ENCODE measurements at regions of chr1 and their contacts with region 1.

Region 1: DNA sequence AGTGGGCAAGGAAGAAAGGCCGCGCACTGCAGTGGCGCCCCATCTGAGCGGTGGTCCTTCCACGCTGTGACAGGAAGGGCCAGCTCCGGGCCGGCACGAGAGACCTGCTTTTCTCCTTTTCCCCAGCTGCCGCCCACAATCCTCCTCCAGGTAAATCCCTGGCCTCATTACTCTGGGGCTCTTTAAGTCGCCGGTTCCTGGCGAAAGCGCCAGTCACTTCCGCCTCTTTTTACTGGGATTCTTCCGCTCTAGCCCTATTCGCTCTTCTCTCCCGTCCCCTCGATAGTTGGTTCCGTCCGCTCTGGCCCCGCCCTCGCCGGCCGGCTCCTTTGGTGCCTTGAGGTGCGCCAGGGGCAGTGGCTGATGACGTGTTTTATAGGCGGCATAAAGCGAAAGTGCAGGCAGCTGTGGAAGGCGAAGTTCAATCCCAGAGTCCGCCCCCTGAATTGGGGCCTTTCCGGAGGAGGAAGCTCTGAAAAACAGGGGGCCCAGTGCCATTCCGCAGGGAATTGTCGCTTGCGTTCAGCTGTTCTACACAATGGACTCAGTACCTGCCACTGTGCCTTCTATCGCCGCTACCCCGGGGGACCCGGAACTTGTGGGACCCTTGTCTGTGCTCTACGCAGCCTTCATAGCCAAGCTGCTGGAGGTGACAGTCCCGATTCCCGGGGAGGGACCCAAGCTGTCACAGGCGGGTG is 26.2 kb downstream of the MIA3 start:
- DNase-seq: peak; percentile 99
- ATAC-seq: peak; percentile 100
- H3K4me3 ChIP-seq: peak overlapping the region; percentile 80
- H3K27ac ChIP-seq: peak overlapping the region; percentile 83
- H3K4me1 ChIP-seq: 0 out of 2 replicates have a peak, but pooled peaks cover 1% of the 10 kb centered on the region
- H3K27me3 ChIP-seq: no peaks in the 10 kb centered on the region
- CTCF ChIP-seq: no peak
- POLR2A ChIP-seq: peak; percentile 95
- RAD21 ChIP-seq: no peak

Region 2: GRCh38 chr1:221458447-221459156 is 1185.5 kb before region 1 on chr1:
- CTCF ChIA-PET with region 1: no interaction called
- POLR2A ChIA-PET with region 1: no interaction called
- dilution Hi-C with region 1: no loop called
- in situ Hi-C with region 1: loop called (anchors 25 kb)
- intact Hi-C with region 1: no loop called
- DNase-seq: peak; percentile 81
- ATAC-seq: peak; percentile 88
- H3K4me3 ChIP-seq: no peak overlapping the region
- H3K27ac ChIP-seq: no peak overlapping the region
- H3K4me1 ChIP-seq: peaks cover 7% of the 10 kb centered on the region
- H3K27me3 ChIP-seq: no peaks in the 10 kb centered on the region
- CTCF ChIP-seq: no peak
- POLR2A ChIP-seq: no peak
- RAD21 ChIP-seq: no peak

Region 3: DNA sequence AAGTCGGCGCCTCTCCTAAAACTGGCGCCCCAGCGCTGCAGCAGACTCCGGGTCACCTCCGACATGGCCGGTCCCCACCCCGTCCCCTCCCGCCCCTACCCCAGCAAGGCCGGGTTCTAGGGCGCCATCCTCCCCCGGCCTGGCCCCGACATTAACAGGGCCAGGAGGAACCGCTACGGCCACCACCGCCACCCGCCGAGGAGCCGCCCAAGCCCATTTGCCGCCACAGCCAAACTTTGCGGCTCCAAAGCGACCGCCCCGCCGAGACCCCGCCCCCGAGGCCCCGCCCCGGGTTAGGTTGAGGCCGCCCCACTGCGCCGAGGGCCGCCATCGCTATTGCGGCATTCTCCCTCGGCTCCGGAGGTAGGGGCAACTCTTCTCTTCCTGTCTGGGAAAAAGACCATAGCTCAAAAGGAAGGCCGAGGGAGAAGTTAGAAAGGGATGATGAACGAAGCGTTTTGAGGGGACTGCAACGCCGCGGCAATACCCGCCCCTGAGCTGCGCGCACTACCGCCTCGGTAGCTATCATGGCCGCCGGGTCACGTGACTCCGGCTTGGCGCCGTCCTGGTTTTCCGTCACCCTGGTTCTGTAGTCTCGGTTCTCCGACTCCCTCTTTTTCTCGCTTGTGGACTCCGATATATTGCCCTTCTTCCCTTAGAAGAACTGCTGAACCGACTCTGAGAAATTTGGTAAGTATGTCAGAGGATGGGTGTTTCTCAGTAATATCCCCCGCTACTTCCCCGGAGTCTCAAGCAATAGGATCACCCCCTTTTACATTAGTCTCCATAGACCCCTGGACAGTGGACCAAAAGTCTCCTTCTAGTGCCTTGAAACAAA is 68.4 kb after region 1 on chr1 and contains the starts of genes AIDA and BROX:
- CTCF ChIA-PET with region 1: no interaction called
- POLR2A ChIA-PET with region 1: no interaction called
- dilution Hi-C with region 1: no loop called
- in situ Hi-C with region 1: no loop called
- intact Hi-C with region 1: loop called (anchors 2 kb)
- DNase-seq: peak; percentile 76
- ATAC-seq: peak; percentile 88
- H3K4me3 ChIP-seq: peak within 1 kb of the TSS; percentile 92
- H3K27ac ChIP-seq: peak within 1 kb of the TSS; percentile 100
- H3K4me1 ChIP-seq: no peaks in the 10 kb centered on the region
- H3K27me3 ChIP-seq: no peaks in the 10 kb centered on the region
- CTCF ChIP-seq: no peak
- POLR2A ChIP-seq: peak; percentile 52; the same call in 1 of the 2 replicates
- RAD21 ChIP-seq: no peak
- total RNA-seq, gene AIDA: 47.9 and 71.4 TPM in 2 replicates
- total RNA-seq, gene BROX: 43.4 and 63.9 TPM in 2 replicates

Region 4: DNA sequence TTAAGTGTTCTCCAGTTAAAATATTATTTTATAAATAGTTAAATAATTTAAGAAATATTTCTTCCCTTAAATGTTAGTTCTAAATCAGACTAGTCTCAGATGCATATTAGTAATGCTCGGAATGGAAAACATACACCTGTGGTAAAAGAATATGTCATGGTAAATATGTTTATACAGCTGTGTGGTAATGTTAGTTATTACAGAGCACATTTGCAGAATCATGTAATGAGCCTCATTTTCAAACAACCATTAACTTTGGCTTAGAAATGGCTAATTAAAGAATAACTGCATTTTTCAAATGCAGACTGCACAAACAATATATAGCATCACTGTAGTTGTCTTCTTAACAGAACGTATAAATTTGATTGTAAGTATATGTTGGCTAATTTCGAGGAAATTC is 261.1 kb after region 1 on chr1:
- CTCF ChIA-PET with region 1: no interaction called
- POLR2A ChIA-PET with region 1: no interaction called
- dilution Hi-C with region 1: no loop called
- in situ Hi-C with region 1: no loop called
- intact Hi-C with region 1: no loop called
- DNase-seq: no peak
- ATAC-seq: no peak
- H3K4me3 ChIP-seq: no peak overlapping the region
- H3K27ac ChIP-seq: no peak overlapping the region
- H3K4me1 ChIP-seq: peaks cover 3% of the 10 kb centered on the region; the same call in 1 of the 2 replicates
- H3K27me3 ChIP-seq: no peaks in the 10 kb centered on the region
- CTCF ChIP-seq: no peak
- POLR2A ChIP-seq: no peak
- RAD21 ChIP-seq: no peak

Measured in IMR-90 (cell line).